Activated T-helper 1 cell treated with anti-CD3 and anti-CD28 coated beads, Interleukin-12 subunit alpha, Interleukin-12 subunit beta, Interleukin-2, Interleukin-4 antibody, amounts not matched to agents 30 ng/mL and 10 ng/mL and 1 ng/mL, durations not matched to agents 14 hours and 24 hours and 36 hours (primary cell): ENCODE measurements at regions of chr2 and their contacts with region 1.

Region 1: GRCh38 chr2:207769597-207770486 is at the start of gene FZD5:
- DNase-seq: peak; percentile 77
- H3K4me3 Mint-ChIP-seq: peak within 1 kb of the TSS; percentile 86
- H3K27ac Mint-ChIP-seq: peak within 1 kb of the TSS; percentile 31
- H3K4me1 Mint-ChIP-seq: peaks cover 25% of the 10 kb centered on the region
- H3K27me3 Mint-ChIP-seq: peaks cover 48% of the 10 kb centered on the region
- total RNA-seq, gene FZD5: 0.86 and 1.0 TPM in 2 replicates

Region 2: GRCh38 chr2:207974216-207974605 is 204.4 kb after region 1 on chr2:
- intact Hi-C with region 1: loop called (anchors 5 kb)
- DNase-seq: no peak
- H3K4me3 Mint-ChIP-seq: no peak overlapping the region
- H3K27ac Mint-ChIP-seq: no peak overlapping the region
- H3K4me1 Mint-ChIP-seq: peaks cover 4% of the 10 kb centered on the region
- H3K27me3 Mint-ChIP-seq: no peaks in the 10 kb centered on the region